HCT116 (cell line): ENCODE measurements at regions of chr20 and their contacts with region 1.

Region 1: GRCh38 chr20:50575847-50576720 is 65.9 kb downstream of the PTPN1 start:
- DNase-seq: peak; percentile 22
- ATAC-seq: peak; percentile 92
- H3K4me3 ChIP-seq: no peak overlapping the region
- H3K27ac ChIP-seq: no peak overlapping the region
- H3K4me1 ChIP-seq: peaks cover 6 to 18% of the 10 kb centered on the region in 2 experiments; a peak in 2 of 4 replicates
- H3K27me3 ChIP-seq: no peaks in the 10 kb centered on the region
- CTCF ChIP-seq: peak; percentile 69 to 82 (median 78)
- POLR2A ChIP-seq: no peak
- RAD21 ChIP-seq: peak; percentile 85

Region 2: GRCh38 chr20:50478162-50479036 is 97.7 kb before region 1 on chr20:
- CTCF ChIA-PET with region 1: interaction called, 9 read pairs
- POLR2A ChIA-PET with region 1: no interaction called
- RAD21 ChIA-PET with region 1: interaction called in 1 of 2 experiments, 3 read pairs
- intact Hi-C with region 1: loop called (anchors 5 kb)
- DNase-seq: peak; percentile 47
- ATAC-seq: peak; percentile 97
- H3K4me3 ChIP-seq: no peak overlapping the region
- H3K27ac ChIP-seq: peak overlapping the region; percentile 16; the same call in 1 of the 2 replicates
- H3K4me1 ChIP-seq: peaks cover 32 to 52% of the 10 kb centered on the region in 2 experiments
- H3K27me3 ChIP-seq: no peaks in the 10 kb centered on the region
- CTCF ChIP-seq: peak; percentile 60 to 87 (median 75); a peak in 5 of 6 replicates
- POLR2A ChIP-seq: no peak
- RAD21 ChIP-seq: peak; percentile 71

Region 3: DNA sequence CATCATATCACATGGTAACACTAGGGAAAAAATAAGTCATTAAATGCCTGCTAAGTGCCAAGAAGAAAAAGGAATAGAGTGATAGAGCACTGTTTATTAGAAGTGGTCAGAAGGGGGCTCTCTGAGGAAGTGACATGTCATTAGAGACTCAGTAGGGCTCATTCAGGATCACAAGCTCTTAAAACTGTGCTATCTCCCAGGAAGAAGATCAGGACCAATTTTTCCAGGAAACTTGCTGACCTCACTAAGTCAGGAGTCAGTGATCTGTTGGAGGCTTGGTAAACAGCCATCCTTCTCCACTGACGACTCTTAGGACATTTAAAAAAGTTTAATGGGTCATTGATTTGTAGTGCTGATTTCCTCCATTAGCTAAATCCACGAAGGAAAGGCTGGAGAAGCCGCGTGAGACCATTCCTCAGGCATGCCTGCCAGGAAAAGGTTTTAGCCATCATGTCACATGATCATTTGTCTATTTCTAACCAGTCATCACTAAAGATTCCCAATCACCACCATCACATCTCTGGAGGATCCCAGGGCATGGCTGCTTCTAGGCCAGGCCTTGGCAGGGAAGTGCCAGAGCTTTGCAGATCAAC is 71.8 kb before region 1 on chr20:
- CTCF ChIA-PET with region 1: interaction called, 3 read pairs
- POLR2A ChIA-PET with region 1: no interaction called
- RAD21 ChIA-PET with region 1: no interaction called
- intact Hi-C with region 1: loop called (anchors 1 kb)
- DNase-seq: peak; percentile 16
- ATAC-seq: peak; percentile 39; the same call in 1 of the 2 replicates
- H3K4me3 ChIP-seq: no peak overlapping the region
- H3K27ac ChIP-seq: no peak overlapping the region
- H3K4me1 ChIP-seq: peaks cover 6 to 33% of the 10 kb centered on the region in 2 experiments
- H3K27me3 ChIP-seq: no peaks in the 10 kb centered on the region
- CTCF ChIP-seq: peak; percentile 9 to 45 (median 11); a peak in 2 of 6 replicates
- POLR2A ChIP-seq: no peak
- RAD21 ChIP-seq: peak; percentile 66